Caco-2 (cell line): ENCODE measurements at regions of chr17 and their contacts with region 1.

Region 1: DNA sequence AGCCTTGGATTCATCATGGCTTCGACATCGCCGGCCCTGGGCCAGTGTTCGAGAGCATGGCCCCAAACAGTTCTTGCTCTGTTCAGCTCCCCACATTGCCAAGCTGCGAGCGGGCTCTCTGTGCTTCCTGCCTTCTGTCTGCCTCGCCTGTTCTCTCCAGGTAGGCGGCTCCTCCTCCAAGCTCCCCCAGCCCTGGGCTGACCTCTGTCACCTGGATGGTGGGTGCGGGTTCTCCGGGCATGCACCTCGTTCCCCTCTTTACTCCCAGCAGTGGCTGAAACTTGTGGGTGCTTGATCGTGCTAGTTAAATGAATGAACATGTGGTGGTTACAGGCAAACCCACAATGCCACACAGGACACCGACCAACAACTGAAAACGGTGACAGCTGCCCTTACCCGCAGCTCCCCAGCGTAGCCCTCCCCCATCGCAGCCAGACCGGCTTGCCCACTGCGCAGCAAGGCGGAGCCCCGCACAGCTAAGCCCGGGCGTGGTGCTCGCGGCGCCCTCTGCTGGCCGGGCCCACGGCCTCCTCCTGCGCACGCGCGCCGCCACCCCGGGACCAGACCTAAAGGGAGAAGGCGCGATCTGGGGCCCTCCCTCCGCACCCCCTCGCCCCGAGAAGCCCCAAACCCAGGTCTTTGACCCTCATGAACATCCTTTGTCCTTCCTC is 23.0 kb upstream of the EIF1 start:
- DNase-seq: peak; percentile 89 to 96
- H3K4me3 ChIP-seq: peak overlapping the region; percentile 54
- H3K4me3 Mint-ChIP-seq: peak overlapping the region; percentile 83
- H3K27ac Mint-ChIP-seq: peak overlapping the region; percentile 78
- H3K4me1 ChIP-seq: peaks cover 11% of the 10 kb centered on the region
- H3K4me1 Mint-ChIP-seq: peaks cover 18% of the 10 kb centered on the region
- H3K27me3 ChIP-seq: no peaks in the 10 kb centered on the region
- H3K27me3 Mint-ChIP-seq: no peaks in the 10 kb centered on the region
- CTCF ChIP-seq: peak; percentile 81 to 97

Region 2: DNA sequence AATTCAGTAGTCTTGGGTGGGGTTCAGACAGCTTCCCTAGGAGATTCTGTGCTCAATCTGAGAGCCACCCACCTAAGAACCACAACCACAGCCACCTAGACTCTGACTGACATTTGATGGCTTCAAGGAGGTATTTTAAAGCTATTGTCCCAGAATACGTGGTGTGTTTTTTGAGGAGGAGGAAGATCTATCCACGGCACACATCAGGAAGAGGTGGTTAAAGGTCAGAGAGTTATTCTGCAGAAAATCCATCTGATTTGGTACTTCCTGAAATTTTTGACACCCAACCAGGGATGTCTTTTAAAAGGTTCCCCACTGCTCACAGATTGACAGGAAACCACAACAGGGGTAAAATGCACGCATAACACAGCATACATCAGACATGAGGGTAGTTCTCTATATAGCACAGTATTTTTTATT is 1043.2 kb before region 1 on chr17:
- CTCF ChIA-PET with region 1: interaction called, 6 read pairs
- POLR2A ChIA-PET with region 1: no interaction called
- intact Hi-C with region 1: loop called (anchors 5 kb)
- DNase-seq: no peak
- H3K4me3 ChIP-seq: no peak overlapping the region
- H3K4me3 Mint-ChIP-seq: no peak overlapping the region
- H3K27ac Mint-ChIP-seq: no peak overlapping the region
- H3K4me1 ChIP-seq: peaks cover 14% of the 10 kb centered on the region
- H3K4me1 Mint-ChIP-seq: peaks cover 6% of the 10 kb centered on the region
- H3K27me3 ChIP-seq: no peaks in the 10 kb centered on the region
- H3K27me3 Mint-ChIP-seq: no peaks in the 10 kb centered on the region
- CTCF ChIP-seq: no peak

Region 3: DNA sequence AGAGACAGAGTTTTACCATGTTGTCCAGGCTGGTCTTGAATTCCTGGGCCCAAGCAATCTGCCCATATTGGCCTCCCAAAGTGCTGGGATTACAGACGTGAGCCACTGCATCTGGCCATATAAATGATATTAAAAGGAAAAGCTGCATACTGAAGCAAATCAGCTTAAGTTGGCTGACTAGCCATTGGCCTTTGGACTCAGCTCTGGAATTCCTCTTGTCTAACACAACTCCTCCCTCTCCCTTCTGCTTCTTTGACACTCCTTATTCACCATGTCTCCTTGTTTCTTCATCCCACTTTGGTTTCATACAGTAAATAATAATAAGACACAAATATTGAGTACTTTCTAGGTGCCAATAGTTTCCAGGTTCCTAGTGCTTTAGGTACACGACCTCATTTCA is 806.2 kb before region 1 on chr17:
- CTCF ChIA-PET with region 1: interaction called, 10 read pairs
- POLR2A ChIA-PET with region 1: no interaction called
- intact Hi-C with region 1: loop called (anchors 5 kb)
- DNase-seq: no peak
- H3K4me3 ChIP-seq: no peak overlapping the region
- H3K4me3 Mint-ChIP-seq: no peak overlapping the region
- H3K27ac Mint-ChIP-seq: peak overlapping the region; percentile 66
- H3K4me1 ChIP-seq: peaks cover 17% of the 10 kb centered on the region
- H3K4me1 Mint-ChIP-seq: peaks cover 22% of the 10 kb centered on the region
- H3K27me3 ChIP-seq: no peaks in the 10 kb centered on the region
- H3K27me3 Mint-ChIP-seq: no peaks in the 10 kb centered on the region
- CTCF ChIP-seq: no peak

Region 4: DNA sequence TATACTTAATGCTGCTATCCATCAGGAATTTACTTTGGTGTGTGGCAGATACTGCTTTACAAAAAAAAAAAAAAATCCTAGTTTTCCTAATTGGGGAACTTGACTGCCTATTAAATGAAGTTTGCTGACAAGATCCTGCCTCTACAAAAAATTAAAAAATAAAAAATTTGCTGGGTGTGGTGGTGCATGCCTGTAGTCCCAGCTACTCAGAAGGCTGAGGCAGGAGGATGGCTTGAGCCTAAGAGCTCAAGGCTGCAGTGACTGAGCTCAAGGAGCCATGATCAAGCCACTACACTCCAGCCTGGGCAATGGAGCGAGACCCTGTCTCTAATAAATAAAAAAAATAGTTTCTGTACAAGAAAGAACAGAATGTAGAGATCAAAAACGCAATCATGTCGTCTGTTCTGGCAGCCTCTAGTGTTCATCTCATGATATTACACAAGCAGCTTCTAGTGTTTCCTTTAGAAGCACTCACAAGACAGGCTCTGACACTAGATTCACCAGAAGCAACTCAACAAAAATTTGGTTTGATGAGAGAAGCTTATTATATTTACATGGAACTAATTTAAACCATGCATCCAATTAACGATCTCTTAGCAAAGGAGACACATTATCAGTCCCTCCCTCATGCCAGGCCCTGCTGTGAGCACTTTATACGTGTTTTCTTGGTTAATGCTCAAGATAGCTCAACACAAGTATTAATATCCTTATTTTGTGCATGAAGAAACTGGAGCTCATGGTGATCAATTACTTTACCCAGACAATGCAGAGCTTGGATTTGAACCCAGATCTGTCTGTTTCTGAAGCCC is 343.4 kb before region 1 on chr17:
- CTCF ChIA-PET with region 1: interaction called, 5 read pairs
- POLR2A ChIA-PET with region 1: no interaction called
- intact Hi-C with region 1: loop called (anchors 5 kb)
- DNase-seq: peak in 1 of 2 experiments; percentile 35
- H3K4me3 ChIP-seq: no peak overlapping the region
- H3K4me3 Mint-ChIP-seq: no peak overlapping the region
- H3K27ac Mint-ChIP-seq: peak overlapping the region; percentile 76
- H3K4me1 ChIP-seq: peaks cover 4% of the 10 kb centered on the region; the same call in 1 of the 2 replicates
- H3K4me1 Mint-ChIP-seq: peaks cover 10% of the 10 kb centered on the region
- H3K27me3 ChIP-seq: no peaks in the 10 kb centered on the region
- H3K27me3 Mint-ChIP-seq: no peaks in the 10 kb centered on the region
- CTCF ChIP-seq: peak; percentile 75 to 86

Region 5: GRCh38 chr17:41548844-41549595 is 116.7 kb before region 1 on chr17:
- CTCF ChIA-PET with region 1: interaction called, 60 read pairs
- POLR2A ChIA-PET with region 1: no interaction called
- intact Hi-C with region 1: loop called (anchors 1 kb)
- DNase-seq: peak; percentile 85 to 87
- H3K4me3 ChIP-seq: no peak overlapping the region
- H3K4me3 Mint-ChIP-seq: peak overlapping the region; percentile 5
- H3K27ac Mint-ChIP-seq: peak overlapping the region; percentile 77
- H3K4me1 ChIP-seq: peaks cover 46% of the 10 kb centered on the region
- H3K4me1 Mint-ChIP-seq: peaks cover 49% of the 10 kb centered on the region
- H3K27me3 ChIP-seq: no peaks in the 10 kb centered on the region
- H3K27me3 Mint-ChIP-seq: no peaks in the 10 kb centered on the region
- CTCF ChIP-seq: peak; percentile 90 to 94

Region 6: GRCh38 chr17:41654133-41654907 is 11.4 kb before region 1 on chr17:
- CTCF ChIA-PET with region 1: interaction called, 147 read pairs
- POLR2A ChIA-PET with region 1: no interaction called
- intact Hi-C with region 1: no loop called
- DNase-seq: peak; percentile 60 to 80
- H3K4me3 ChIP-seq: no peak overlapping the region
- H3K4me3 Mint-ChIP-seq: no peak overlapping the region
- H3K27ac Mint-ChIP-seq: no peak overlapping the region
- H3K4me1 ChIP-seq: peaks cover 35% of the 10 kb centered on the region
- H3K4me1 Mint-ChIP-seq: peaks cover 7% of the 10 kb centered on the region
- H3K27me3 ChIP-seq: no peaks in the 10 kb centered on the region
- H3K27me3 Mint-ChIP-seq: no peaks in the 10 kb centered on the region
- CTCF ChIP-seq: no peak